Right ventricle myocardium inferior (tissue), 1 donor: ENCODE measurements at regions of chr2 and their contacts with region 1.

Region 1: GRCh38 chr2:217331523-217332139 is 471.8 kb upstream of the TNP1 start:
- DNase-seq: no peak
- ATAC-seq: peak; percentile 77

Region 2: DNA sequence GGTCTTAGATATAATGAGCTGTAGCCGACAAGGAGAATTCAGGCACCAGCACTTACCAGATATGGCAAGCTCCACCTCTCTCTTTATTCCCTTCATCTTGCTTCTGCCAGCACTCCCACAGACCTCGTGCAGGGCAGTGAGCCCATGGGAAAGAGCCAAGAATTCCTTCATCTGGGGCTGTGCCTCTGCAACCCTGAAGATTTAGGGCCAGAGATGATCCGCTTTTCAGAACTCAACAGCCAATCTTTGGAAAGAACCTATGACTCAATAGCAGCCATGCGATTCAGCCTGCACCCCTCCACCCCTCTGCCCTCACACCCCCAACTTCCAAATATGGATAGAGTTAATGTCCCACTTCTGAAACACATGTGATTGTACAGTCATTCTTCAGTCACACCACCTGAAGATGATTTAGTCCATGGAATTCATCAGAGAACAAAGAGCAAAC is 62.0 kb after region 1 on chr2:
- intact Hi-C with region 1: loop called (anchors 2 kb)
- DNase-seq: no peak
- ATAC-seq: peak; percentile 95